Activated CD4-positive, alpha-beta memory T cell treated with anti-CD3 and anti-CD28 coated beads for 36 hours (primary cell): ENCODE measurements at regions of chr18 and their contacts with region 1.

Region 1: GRCh38 chr18:63578357-63578958 is 8.7 kb upstream of the SERPINB13 start:
- DNase-seq: no peak
- H3K4me3 Mint-ChIP-seq: no peak overlapping the region
- H3K27ac Mint-ChIP-seq: no peak overlapping the region
- H3K4me1 Mint-ChIP-seq: no peaks in the 10 kb centered on the region
- H3K27me3 Mint-ChIP-seq: peaks cover 3% of the 10 kb centered on the region

Region 2: GRCh38 chr18:63511286-63511685 is 67.2 kb before region 1 on chr18:
- CTCF ChIA-PET with region 1: interaction called, 89 read pairs
- POLR2A ChIA-PET with region 1: no interaction called
- intact Hi-C with region 1: no loop called
- DNase-seq: peak; percentile 11
- H3K4me3 Mint-ChIP-seq: no peak overlapping the region
- H3K27ac Mint-ChIP-seq: no peak overlapping the region
- H3K4me1 Mint-ChIP-seq: no peaks in the 10 kb centered on the region
- H3K27me3 Mint-ChIP-seq: peaks cover 19% of the 10 kb centered on the region

Region 3: GRCh38 chr18:63518178-63519012 is 60.1 kb before region 1 on chr18:
- CTCF ChIA-PET with region 1: interaction called, 89 read pairs
- POLR2A ChIA-PET with region 1: no interaction called
- intact Hi-C with region 1: loop called (anchors 1 kb)
- DNase-seq: peak; percentile 62
- H3K4me3 Mint-ChIP-seq: no peak overlapping the region
- H3K27ac Mint-ChIP-seq: no peak overlapping the region
- H3K4me1 Mint-ChIP-seq: no peaks in the 10 kb centered on the region
- H3K27me3 Mint-ChIP-seq: peaks cover 5% of the 10 kb centered on the region

Region 4: DNA sequence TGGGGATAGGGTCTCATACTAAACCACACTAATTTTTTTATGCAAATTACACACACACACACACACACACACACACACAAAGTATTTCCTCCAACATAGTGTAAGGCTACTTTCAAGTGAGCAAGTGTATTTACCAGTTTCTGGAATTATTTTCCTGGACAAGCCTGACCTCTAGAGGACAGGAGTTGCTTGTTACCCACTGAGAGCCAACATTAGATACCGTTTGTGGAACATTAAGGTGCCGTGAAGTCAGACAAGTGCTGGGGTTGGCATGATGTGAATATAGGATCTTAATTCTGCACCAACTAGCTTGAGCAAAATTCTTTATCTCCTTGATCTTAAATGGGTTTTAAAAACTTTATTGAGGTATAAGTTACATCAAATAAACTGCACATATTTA is 269.7 kb after region 1 on chr18:
- CTCF ChIA-PET with region 1: interaction called, 6 read pairs
- POLR2A ChIA-PET with region 1: no interaction called
- intact Hi-C with region 1: loop called (anchors 5 kb)
- DNase-seq: no peak
- H3K4me3 Mint-ChIP-seq: no peak overlapping the region
- H3K27ac Mint-ChIP-seq: no peak overlapping the region
- H3K4me1 Mint-ChIP-seq: no peaks in the 10 kb centered on the region
- H3K27me3 Mint-ChIP-seq: peaks cover 11% of the 10 kb centered on the region

Region 5: GRCh38 chr18:64165906-64166305 is 587.4 kb after region 1 on chr18:
- CTCF ChIA-PET with region 1: no interaction called
- POLR2A ChIA-PET with region 1: no interaction called
- intact Hi-C with region 1: no loop called
- DNase-seq: no peak
- H3K4me3 Mint-ChIP-seq: no peak overlapping the region
- H3K27ac Mint-ChIP-seq: no peak overlapping the region
- H3K4me1 Mint-ChIP-seq: no peaks in the 10 kb centered on the region
- H3K27me3 Mint-ChIP-seq: no peaks in the 10 kb centered on the region